Activated CD8-positive, alpha-beta T cell treated with anti-CD3 and anti-CD28 coated beads for 36 hours (primary cell): ENCODE measurements at regions of chr5 and their contacts with region 1.

Region 1: DNA sequence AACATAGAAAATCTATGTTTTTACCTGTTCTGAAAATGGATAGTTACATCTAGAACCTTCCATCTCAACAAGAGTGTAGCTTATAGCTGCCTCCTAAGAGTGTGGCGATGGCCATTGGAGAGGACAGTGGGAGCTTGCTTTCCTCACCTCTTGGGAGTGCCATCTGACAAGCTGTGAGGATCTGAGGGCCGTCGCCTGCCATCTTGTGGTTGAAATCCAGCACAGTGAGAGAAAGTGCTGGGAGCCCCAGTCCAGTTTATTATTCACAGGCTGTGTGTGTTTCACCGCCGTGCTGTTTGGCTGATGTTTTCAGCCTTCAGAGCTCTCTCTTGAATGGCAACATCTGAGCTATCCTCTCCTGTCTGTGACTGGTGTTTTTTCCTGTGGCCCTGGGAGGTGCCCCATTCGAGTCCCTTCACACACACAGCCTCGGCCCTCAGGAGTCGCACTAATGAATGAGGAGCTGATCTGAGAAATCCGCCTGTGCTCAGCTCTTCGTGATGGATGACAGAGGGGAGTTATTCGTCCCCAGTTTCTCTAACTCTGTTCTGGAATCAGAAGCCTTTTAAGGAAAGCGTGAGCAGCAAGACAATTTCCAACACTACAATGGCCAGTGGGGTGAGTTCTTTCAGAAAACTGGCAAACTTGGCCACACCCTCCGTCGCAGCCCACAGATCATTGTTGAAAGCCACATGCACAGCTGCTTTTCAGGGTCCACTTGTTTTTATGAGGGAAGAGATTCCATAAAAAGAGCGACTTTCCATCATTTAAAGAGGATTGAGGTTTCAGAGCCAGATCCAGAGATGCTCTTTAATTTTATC is 170.3 kb downstream of the PDZD2 start:
- DNase-seq: peak; percentile 49
- ATAC-seq: no peak
- H3K4me3 Mint-ChIP-seq: no peak overlapping the region
- H3K27ac Mint-ChIP-seq: no peak overlapping the region
- H3K4me1 Mint-ChIP-seq: no peaks in the 10 kb centered on the region
- H3K27me3 Mint-ChIP-seq: peaks cover 2% of the 10 kb centered on the region
- CTCF ChIP-seq: peak; percentile 32

Region 2: GRCh38 chr5:31066655-31067328 is 742.5 kb before region 1 on chr5:
- CTCF ChIA-PET with region 1: no interaction called
- POLR2A ChIA-PET with region 1: no interaction called
- intact Hi-C with region 1: no loop called
- DNase-seq: no peak
- ATAC-seq: no peak
- H3K4me3 Mint-ChIP-seq: no peak overlapping the region
- H3K27ac Mint-ChIP-seq: no peak overlapping the region
- H3K4me1 Mint-ChIP-seq: no peaks in the 10 kb centered on the region
- H3K27me3 Mint-ChIP-seq: no peaks in the 10 kb centered on the region
- CTCF ChIP-seq: no peak

Region 3: DNA sequence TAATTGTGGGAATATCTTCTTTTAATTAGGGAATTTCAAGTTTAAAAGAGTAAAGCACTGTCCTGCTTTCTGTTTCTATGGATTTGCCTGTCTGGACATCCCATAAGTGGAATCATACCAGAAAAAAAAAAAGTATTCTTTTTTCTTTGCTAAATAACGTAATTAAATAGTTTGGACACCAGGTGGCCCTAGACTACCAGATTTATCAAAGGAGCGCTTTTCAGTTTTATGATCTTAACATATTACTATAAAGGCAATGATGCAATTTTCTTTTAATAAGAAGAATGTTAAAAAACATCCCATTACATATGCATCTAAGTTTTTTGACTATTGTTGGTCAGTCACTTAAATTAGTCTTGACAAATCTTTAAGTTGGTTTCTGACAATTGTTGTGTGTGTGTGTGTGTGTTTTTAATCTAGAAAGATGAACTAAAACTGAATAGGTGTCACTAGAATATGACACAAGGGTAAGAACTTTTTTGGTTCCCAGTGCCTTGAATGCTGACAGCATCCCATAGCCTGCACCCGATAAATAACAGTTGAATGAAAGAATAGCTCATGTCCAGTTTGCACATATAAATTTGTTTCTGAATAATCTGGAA is 227.7 kb before region 1 on chr5:
- CTCF ChIA-PET with region 1: interaction called, 3 read pairs
- POLR2A ChIA-PET with region 1: no interaction called
- intact Hi-C with region 1: loop called (anchors 2 kb)
- DNase-seq: no peak
- ATAC-seq: no peak
- H3K4me3 Mint-ChIP-seq: no peak overlapping the region
- H3K27ac Mint-ChIP-seq: no peak overlapping the region
- H3K4me1 Mint-ChIP-seq: no peaks in the 10 kb centered on the region
- H3K27me3 Mint-ChIP-seq: peaks cover 17% of the 10 kb centered on the region
- CTCF ChIP-seq: peak; percentile 60